Transverse colon (tissue), 4 donors: ENCODE measurements at regions of chr17 and their contacts with region 1.

Region 1: DNA sequence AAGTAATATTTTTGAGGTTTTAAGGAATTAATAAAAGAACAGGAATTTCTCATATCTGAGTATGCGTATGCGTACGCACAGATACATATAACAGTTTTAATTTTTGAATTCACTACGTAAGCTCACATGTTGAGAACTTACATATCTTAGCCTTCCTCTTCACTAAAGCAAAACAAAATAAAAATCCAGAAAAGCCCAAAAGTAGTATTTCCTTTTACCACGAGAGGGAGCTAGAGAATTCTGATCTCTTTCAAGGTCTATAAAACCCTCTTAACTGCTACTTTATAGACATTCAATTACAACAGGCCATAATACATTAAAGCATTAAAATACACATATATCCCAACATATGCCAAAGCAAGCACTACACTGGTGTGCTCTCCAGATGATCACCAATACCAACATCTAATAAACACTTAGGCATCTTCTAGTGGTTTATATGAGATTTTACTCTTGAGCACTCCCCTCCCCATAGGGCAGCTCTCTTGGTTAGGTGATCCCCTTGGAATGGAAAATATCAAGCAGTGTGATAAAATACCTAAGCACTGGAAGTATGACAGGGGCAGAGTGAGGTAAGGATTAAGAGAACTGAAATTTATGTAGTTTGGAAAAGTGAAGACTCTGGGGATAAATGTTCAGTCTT is 94.0 kb downstream of the SKAP1 start:
- DNase-seq: no peak
- H3K4me3 ChIP-seq: no peak overlapping the region
- H3K27ac ChIP-seq: no peak overlapping the region
- H3K4me1 ChIP-seq: peaks cover 0 to 3% (median 0%) of the 10 kb centered on the region in 4 donors
- H3K27me3 ChIP-seq: peaks cover 89% of the 10 kb centered on the region
- CTCF ChIP-seq: peak; percentile 74 to 78 (median 77)
- EP300 ChIP-seq: no peak
- POLR2A ChIP-seq: no peak

Region 2: GRCh38 chr17:48457080-48457836 is 121.3 kb after region 1 on chr17:
- in situ Hi-C with region 1: loop called in 2 of 4 experiments (anchors 10 kb)
- intact Hi-C with region 1: no loop called
- DNase-seq: peak; percentile 61
- H3K4me3 ChIP-seq: peak overlapping the region in 1 of 4 donors; percentile 14
- H3K27ac ChIP-seq: no peak overlapping the region
- H3K4me1 ChIP-seq: peaks cover 0 to 13% (median 6%) of the 10 kb centered on the region in 4 donors
- H3K27me3 ChIP-seq: peaks cover 12% of the 10 kb centered on the region
- CTCF ChIP-seq: peak; percentile 84 to 99 (median 96)
- EP300 ChIP-seq: no peak
- POLR2A ChIP-seq: no peak

Region 3: DNA sequence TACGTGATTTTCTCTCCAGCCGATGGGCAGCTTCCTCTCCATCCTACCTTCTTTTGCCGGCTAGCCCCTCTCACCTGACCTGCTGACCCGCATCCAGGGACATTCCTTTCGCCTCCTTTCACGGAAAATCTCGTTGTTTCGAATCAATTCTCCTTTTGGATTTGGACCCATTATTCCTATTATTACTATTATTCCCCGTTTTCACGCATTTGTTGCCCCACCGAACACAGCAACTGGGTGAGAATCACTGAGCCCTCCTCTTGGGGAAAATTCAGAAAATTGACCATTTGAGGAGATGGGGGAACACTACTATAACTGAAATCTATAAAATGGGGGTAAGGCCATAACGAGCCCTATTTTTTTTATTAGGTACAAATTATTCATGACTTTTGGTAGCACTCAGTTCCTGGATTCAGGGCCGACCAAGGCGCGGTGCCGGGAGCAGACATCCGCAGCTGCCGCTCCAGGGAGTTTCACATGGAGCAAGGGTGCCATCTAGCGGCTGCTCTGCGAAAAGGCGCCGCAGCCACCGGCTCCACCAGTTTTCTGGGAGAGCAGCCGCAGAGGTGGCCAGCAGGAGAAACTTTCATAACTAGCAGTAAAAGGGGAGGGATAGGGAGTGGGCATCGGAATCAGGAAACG is 282.4 kb after region 1 on chr17:
- in situ Hi-C with region 1: no loop called
- intact Hi-C with region 1: loop called (anchors 5 kb)
- DNase-seq: peak; percentile 94
- H3K4me3 ChIP-seq: peak overlapping the region in 2 of 4 donors; percentile 22 to 39
- H3K27ac ChIP-seq: peak overlapping the region in 3 of 4 donors; percentile 74 to 82 (median 79)
- H3K4me1 ChIP-seq: peaks cover 0 to 79% (median 51%) of the 10 kb centered on the region in 4 donors
- H3K27me3 ChIP-seq: peaks cover 100% of the 10 kb centered on the region
- CTCF ChIP-seq: peak; percentile 96 to 100 (median 98)
- EP300 ChIP-seq: no peak
- POLR2A ChIP-seq: no peak